AG04450 (cell line): ENCODE measurements at regions of chr5 and their contacts with region 1.

Region 1: DNA sequence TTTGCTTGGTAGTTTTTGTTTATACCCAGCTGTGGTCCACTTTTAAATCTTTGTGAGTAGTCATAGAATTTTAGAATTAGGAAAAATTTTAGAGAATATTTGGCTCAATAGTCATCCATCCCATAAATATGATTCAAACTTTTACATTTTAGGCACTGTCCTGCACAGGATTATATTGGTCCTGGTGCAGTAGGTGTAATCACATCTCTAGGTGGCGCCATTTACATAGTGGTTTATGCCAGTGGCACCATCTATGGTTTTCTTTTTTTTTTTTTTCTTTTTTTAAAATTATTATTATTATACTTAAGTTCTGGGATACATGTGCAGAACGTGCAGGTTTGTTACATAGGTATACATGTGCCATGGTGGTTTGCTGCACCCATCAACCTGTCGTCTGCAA is 260.7 kb upstream of the KCNN2 start:
- DNase-seq: peak; percentile 20
- H3K4me3 ChIP-seq: no peak overlapping the region
- H3K27ac ChIP-seq: no peak overlapping the region
- H3K27me3 ChIP-seq: no peaks in the 10 kb centered on the region
- CTCF ChIP-seq: peak; percentile 72

Region 2: GRCh38 chr5:114305402-114306211 is 204.5 kb after region 1 on chr5:
- CTCF ChIA-PET with region 1: interaction called, 16 read pairs
- POLR2A ChIA-PET with region 1: no interaction called
- DNase-seq: peak; percentile 30
- H3K4me3 ChIP-seq: no peak overlapping the region
- H3K27ac ChIP-seq: no peak overlapping the region
- H3K27me3 ChIP-seq: no peaks in the 10 kb centered on the region
- CTCF ChIP-seq: peak; percentile 78

Region 3: DNA sequence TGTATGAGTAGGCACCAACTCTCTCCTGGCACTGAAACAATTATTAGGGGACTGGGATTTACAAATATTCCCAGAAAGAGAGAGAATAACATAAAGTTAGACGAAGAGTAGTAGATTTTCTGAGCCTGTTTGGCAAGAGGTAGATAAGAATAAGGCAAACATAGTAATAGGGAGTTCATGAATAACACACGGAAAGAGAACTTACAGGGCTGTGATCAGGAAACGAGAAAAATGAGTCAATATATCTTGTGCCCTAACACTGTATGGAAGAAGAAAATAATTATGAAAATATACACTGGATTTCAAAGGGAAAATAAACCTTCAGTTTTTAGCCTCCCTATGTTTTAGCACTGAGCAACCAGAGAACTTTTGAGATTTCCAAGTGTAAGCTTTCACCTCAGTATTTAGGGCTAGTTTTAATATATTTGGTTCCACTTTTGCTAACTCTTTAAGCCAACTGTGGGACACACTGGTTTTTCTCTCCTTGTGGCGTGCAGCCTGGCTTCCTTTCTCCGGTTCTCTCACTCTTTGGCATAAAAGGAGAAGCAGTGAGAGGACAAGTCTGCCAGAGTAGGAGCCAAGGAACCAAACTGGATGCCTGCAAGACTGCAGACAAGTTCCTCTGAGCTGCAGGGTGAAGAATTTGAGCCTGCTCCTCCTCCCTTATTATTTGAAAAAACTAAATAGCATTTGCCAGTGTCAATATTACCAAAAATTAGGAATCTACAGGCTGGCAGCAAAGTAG is 254.1 kb after region 1 on chr5:
- CTCF ChIA-PET with region 1: interaction called, 11 read pairs
- POLR2A ChIA-PET with region 1: no interaction called
- DNase-seq: no peak
- H3K4me3 ChIP-seq: no peak overlapping the region
- H3K27ac ChIP-seq: no peak overlapping the region
- H3K27me3 ChIP-seq: peaks cover 9% of the 10 kb centered on the region
- CTCF ChIP-seq: no peak